Vagina (tissue), 2 donors: ENCODE measurements at regions of chr4 and their contacts with region 1.

Region 1: GRCh38 chr4:164359881-164360280 is 394.1 kb upstream of the SMIM31 start:
- DNase-seq: no peak
- H3K4me3 ChIP-seq: no peak overlapping the region
- H3K27ac ChIP-seq: no peak overlapping the region
- H3K4me1 ChIP-seq: no peaks in the 10 kb centered on the region
- H3K27me3 ChIP-seq: no peaks in the 10 kb centered on the region
- CTCF ChIP-seq: no peak
- POLR2A ChIP-seq: no peak

Region 2: GRCh38 chr4:164070625-164071024 is 289.3 kb before region 1 on chr4:
- intact Hi-C with region 1: loop called (anchors 5 kb)
- DNase-seq: no peak
- H3K4me3 ChIP-seq: no peak overlapping the region
- H3K27ac ChIP-seq: no peak overlapping the region
- H3K4me1 ChIP-seq: no peaks in the 10 kb centered on the region
- H3K27me3 ChIP-seq: no peaks in the 10 kb centered on the region
- CTCF ChIP-seq: no peak
- POLR2A ChIP-seq: no peak

Region 3: DNA sequence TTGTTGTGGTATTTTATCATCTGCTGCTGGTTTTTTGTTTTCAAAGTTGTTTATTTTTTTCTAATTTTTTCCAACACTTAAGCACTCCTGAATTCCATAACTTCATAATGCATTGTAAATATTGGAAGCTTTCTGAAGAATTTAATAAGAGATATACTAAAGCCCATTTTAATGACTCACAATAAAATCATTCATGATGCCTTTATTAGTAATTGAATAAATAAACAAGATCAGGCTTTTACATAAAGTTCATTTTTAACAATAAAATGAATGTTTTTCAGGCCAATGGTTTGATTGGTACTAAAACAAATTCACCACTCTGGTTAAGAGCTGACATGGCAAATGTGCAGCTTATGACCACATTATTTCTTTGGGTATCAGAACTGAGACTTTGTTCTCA is 14.1 kb before region 1 on chr4:
- intact Hi-C with region 1: no loop called
- DNase-seq: no peak
- H3K4me3 ChIP-seq: no peak overlapping the region
- H3K27ac ChIP-seq: no peak overlapping the region
- H3K4me1 ChIP-seq: no peaks in the 10 kb centered on the region
- H3K27me3 ChIP-seq: no peaks in the 10 kb centered on the region
- CTCF ChIP-seq: no peak
- POLR2A ChIP-seq: no peak